Ovary (tissue), 10 donors: ENCODE measurements at regions of chr1 and their contacts with region 1.

Region 1: GRCh38 chr1:3319874-3320245 is 134.6 kb upstream of the ARHGEF16 start:
- DNase-seq: peak in 1 of 5 donors; percentile 61
- H3K4me3 ChIP-seq: no peak overlapping the region
- H3K27ac ChIP-seq: no peak overlapping the region
- H3K4me1 ChIP-seq: no peaks in the 10 kb centered on the region
- H3K27me3 ChIP-seq: no peaks in the 10 kb centered on the region
- CTCF ChIP-seq: peak in 2 of 3 donors; percentile 41 to 50
- EP300 ChIP-seq: no peak
- POLR2A ChIP-seq: no peak

Region 2: DNA sequence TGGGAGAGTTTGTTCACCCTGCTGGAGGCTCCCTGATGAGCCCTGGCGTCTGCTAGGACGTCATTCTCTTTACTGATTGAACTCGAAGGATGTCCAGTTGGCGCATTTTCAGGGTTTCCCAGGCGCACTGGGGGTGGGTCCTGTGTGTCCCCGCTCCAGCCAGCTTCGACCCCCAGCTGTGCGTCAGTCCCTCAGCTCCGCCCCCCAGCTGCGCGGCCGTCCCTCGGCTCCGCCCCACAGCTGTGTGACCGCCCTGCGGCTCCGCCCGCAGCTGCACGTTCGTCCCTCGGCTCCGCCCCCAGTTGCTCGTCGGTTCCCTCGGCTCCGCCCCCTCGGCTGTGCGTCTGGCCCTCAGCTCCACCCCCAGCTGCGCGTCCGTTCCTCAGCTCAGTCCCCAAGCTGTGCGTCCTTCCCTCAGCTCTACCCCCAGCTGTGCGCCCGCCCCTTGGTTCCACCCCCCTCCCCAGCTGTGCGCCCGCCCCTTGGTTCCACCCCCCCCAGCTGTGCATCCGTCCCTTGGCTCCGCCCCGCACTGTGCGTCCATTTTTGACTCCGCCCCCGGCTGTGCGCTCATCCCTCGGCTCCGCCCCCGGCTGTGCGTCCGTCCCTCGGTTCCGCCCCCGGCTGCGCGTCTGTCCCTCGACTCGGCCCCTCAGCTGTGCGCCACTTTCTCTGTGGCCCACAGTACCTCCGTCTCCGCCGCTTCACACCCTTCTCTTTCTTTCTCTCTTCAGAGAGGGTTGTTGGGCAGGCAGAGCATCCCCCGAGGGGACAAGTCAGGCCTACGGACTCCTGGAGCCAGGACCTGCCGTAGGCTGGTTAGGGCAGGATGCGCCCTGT is 1186.6 kb before region 1 on chr1:
- intact Hi-C with region 1: loop called in 1 of 4 experiments (anchors 10 kb)
- DNase-seq: peak; percentile 98 to 99 (median 99)
- H3K4me3 ChIP-seq: peak overlapping the region; percentile 37
- H3K27ac ChIP-seq: peak overlapping the region; percentile 83 to 96
- H3K4me1 ChIP-seq: peaks cover 2% of the 10 kb centered on the region
- H3K27me3 ChIP-seq: no peaks in the 10 kb centered on the region
- CTCF ChIP-seq: no peak
- EP300 ChIP-seq: peak; percentile 79
- POLR2A ChIP-seq: peak; percentile 84

Region 3: DNA sequence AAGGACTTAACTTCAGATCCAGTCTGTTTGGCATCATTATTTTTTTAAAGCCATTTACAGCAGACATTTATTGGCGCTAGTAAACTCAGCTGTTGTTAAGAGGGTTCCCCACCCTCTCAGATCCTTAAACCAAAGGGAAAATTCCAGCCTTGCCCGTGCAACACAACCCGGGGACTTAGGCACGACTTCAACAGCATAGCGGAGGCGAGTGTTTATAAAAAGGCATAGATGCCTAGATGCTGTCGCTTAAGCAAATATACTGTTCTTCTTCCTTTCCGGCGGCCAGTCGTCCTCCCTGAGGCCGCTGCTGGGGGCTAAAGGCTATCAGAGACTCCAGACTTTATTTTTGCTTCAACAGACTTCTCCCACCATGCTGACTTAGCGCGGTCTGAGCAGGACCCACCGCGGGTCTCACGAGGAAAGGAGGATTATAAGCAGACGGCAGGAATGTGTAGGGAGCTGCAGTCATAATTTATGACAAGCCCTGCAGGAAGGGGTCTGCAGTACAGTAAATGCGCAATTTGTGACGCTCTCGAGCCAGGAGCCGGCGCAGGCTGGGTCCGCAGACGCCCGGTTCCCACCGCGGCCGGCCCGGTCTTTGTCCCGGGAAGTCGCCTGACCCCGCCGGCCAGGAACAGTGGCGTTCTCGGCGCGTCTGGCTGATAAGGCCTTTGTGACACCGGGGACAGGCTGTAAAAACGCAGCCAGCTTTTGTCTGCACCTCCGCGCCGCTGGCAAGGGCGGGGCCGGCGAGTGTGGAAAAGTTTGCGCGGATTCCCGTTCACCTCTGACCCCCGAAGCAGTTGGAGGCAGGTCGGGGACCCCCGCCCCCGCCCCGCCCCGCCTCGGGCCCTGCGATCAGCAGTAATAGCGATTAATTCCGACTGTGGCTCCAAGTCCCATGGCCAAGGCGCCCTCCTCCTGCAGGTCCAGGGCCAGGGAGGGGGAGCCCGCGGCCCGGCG is 73.4 kb after region 1 on chr1:
- intact Hi-C with region 1: no loop called
- DNase-seq: no peak
- H3K4me3 ChIP-seq: no peak overlapping the region
- H3K27ac ChIP-seq: no peak overlapping the region
- H3K4me1 ChIP-seq: no peaks in the 10 kb centered on the region
- H3K27me3 ChIP-seq: no peaks in the 10 kb centered on the region
- CTCF ChIP-seq: no peak
- EP300 ChIP-seq: no peak
- POLR2A ChIP-seq: no peak

Region 4: DNA sequence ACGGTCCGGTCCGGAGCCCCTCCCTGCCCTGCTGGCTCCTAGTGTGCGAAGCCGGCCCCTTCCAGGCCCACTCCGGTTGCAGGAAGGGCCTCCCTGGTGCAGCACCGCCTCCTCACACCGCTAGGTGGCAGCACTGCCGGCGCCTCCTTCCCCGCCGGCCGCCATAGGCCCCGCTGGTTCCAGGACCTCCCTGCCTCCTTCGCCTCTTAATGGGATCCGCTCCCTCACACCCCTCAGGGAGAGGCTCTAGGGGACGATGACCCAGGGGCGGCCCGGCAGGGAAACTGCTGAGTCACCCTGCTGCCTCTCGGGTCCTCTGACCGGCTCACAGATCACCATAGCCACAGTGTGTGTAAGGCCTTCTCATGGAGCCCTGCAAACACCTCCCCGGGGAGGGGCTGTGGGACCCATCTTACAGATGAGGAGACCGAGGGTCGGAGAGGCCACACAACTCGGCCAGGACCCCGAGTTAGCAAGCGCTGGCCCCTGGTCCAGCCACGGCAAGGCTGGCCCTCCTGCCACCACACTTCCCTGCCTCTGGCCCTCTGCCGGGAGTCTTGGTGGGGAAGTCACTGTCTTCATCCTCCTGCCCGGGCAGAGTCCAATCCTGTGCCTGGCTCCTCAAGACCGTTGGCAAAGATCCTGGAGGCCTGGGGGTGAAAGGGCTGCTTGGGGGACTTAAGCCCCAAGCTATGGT is 1332.9 kb after region 1 on chr1:
- intact Hi-C with region 1: no loop called
- DNase-seq: peak; percentile 51 to 83 (median 57)
- H3K4me3 ChIP-seq: no peak overlapping the region
- H3K27ac ChIP-seq: no peak overlapping the region
- H3K4me1 ChIP-seq: peaks cover 4% of the 10 kb centered on the region
- H3K27me3 ChIP-seq: no peaks in the 10 kb centered on the region
- CTCF ChIP-seq: peak; percentile 69 to 92 (median 81)
- EP300 ChIP-seq: no peak
- POLR2A ChIP-seq: no peak